GM12878 (cell line): ENCODE measurements at regions of chr1 and their contacts with region 1.

Region 1: GRCh38 chr1:180428782-180429695 is 73.3 kb downstream of the ACBD6 start:
- DNase-seq: no peak
- ATAC-seq: peak; percentile 76
- H3K4me3 ChIP-seq: no peak overlapping the region
- H3K27ac ChIP-seq: no peak overlapping the region; the same call in 1 of the 2 replicates
- H3K4me1 ChIP-seq: no peaks in the 10 kb centered on the region
- H3K27me3 ChIP-seq: no peaks in the 10 kb centered on the region
- CTCF ChIP-seq: no peak
- EP300 ChIP-seq: no peak
- POLR2A ChIP-seq: no peak
- RAD21 ChIP-seq: no peak

Region 2: DNA sequence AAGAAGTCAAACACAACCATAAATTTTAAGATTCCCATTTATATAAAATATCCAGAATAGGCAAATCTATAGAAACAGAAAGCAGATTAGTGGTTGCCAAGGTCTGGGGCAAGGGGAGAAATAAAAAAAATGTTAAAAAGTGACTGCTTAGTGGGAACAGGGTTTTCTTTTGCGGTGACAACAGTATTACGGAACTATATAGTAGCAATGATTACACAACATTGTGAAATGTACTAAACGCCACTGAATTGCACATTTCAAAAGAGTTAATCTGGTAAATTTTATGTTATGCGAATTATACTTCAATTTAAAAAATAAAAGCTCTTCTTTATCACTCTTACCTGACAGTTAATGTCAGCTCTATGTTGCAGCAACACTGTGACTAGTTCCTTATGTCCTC is 31.9 kb before region 1 on chr1:
- CTCF ChIA-PET with region 1: no interaction called
- POLR2A ChIA-PET with region 1: no interaction called
- RAD21 ChIA-PET with region 1: no interaction called
- SMC1A ChIA-PET with region 1: no interaction called
- in situ Hi-C with region 1: no loop called
- intact Hi-C with region 1: no loop called
- DNase-seq: no peak
- ATAC-seq: no peak
- H3K4me3 ChIP-seq: no peak overlapping the region
- H3K27ac ChIP-seq: no peak overlapping the region
- H3K4me1 ChIP-seq: no peaks in the 10 kb centered on the region
- H3K27me3 ChIP-seq: no peaks in the 10 kb centered on the region
- CTCF ChIP-seq: no peak
- EP300 ChIP-seq: no peak
- POLR2A ChIP-seq: no peak
- RAD21 ChIP-seq: no peak

Region 3: DNA sequence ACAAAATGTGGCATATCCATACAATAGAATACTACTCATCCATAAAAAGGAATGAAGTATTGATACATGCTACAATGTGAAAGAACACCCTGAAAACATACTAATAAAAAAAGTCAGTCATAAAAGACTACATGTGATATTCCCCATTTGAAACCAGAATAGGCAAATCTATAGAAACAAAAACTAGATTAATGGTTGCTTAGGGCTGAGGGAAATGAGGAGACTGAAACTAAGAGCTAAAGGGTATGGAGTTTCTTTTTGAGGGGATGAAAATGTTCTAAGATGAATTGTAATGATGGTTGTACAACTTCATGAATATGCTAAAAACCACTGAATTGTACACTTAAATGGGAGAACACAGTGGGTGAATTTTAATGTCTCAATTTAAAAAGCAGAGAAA is 22.5 kb after region 1 on chr1:
- CTCF ChIA-PET with region 1: interaction called, 4 read pairs
- POLR2A ChIA-PET with region 1: interaction called, 3 read pairs
- RAD21 ChIA-PET with region 1: interaction called, 5 read pairs
- SMC1A ChIA-PET with region 1: interaction called, 10 read pairs
- in situ Hi-C with region 1: no loop called
- intact Hi-C with region 1: no loop called
- DNase-seq: no peak
- ATAC-seq: peak; percentile 59
- H3K4me3 ChIP-seq: peak overlapping the region; percentile 0; the same call in 1 of the 2 replicates
- H3K27ac ChIP-seq: no peak overlapping the region
- H3K4me1 ChIP-seq: no peaks in the 10 kb centered on the region
- H3K27me3 ChIP-seq: no peaks in the 10 kb centered on the region
- CTCF ChIP-seq: no peak
- EP300 ChIP-seq: no peak
- POLR2A ChIP-seq: no peak
- RAD21 ChIP-seq: no peak

Region 4: DNA sequence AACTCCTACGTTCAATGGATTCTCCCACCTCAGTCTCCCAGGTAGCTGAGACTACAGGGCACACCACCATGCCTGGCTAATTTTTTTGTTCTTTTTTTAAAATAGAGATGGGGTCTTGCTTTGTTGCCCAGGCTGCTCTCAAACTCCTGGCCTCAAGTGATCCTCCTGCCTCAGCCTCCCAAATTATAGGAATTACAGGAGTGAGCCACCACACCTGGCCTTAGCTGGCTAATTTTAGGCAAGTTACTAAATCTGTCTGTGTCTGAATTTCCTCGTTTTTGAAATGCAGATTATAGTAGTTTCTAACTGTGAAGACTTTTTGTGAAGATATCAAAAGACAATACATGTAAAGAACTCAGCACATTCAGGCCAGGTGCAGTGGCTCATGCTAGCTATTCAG is 59.6 kb after region 1 on chr1:
- CTCF ChIA-PET with region 1: no interaction called
- POLR2A ChIA-PET with region 1: no interaction called
- RAD21 ChIA-PET with region 1: no interaction called
- SMC1A ChIA-PET with region 1: no interaction called
- in situ Hi-C with region 1: no loop called
- intact Hi-C with region 1: no loop called
- DNase-seq: no peak
- ATAC-seq: no peak
- H3K4me3 ChIP-seq: no peak overlapping the region
- H3K27ac ChIP-seq: no peak overlapping the region
- H3K4me1 ChIP-seq: no peaks in the 10 kb centered on the region
- H3K27me3 ChIP-seq: no peaks in the 10 kb centered on the region
- CTCF ChIP-seq: no peak
- EP300 ChIP-seq: no peak
- POLR2A ChIP-seq: no peak
- RAD21 ChIP-seq: no peak